ENCODE measurements at regions of chr3 and their contacts with region 1.

Region 1: DNA sequence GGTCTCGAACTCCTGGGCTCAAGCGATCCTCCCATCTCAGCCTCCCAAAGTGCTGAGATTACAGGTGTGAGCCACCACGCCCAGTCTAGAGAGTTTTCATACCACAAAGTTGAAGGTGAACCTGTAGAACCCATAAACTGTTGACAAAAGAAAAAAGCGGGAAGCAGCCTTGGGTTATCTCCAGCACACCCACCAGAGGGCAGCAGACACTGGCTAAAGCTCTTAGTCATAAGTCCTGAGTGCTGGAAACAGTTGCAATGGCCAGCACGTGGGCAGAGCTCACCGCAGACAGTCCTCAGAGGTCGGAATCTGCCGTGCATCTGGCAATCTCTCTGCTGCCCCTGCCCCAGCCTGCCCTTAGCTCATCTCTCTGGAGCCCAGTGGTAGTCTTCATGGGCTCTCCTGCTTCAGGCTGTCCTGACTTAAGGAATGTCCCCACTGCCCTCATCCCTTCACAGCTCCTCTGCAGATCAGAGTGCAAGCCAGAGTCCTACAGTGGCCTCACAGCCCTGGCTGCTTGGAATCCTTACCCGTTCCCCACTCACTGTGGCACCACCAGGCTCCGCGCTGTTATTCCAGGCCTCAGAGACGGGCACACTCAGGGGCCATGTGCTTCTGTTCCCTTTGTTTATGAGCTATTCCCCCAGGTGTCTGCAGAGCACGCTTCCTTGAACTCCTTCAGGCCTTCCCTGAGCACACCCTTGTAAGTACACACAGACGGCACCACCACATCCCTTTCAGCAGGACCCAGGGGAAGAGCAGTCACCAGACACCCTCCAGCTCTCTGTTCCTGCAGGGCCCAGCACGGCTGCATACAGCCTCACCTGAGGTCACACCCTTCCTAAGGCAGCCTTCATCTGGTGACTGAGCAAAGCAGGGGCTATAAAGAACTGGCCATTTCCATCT is 8.8 kb upstream of the ELP6 start:
- DNase-seq: peak; percentile 25 to 85 (median 57)
- ATAC-seq: peak; percentile 85 to 93 (median 87)
- H3K4me3 ChIP-seq: no peak overlapping the region
- H3K4me3 Mint-ChIP-seq: no peak overlapping the region
- H3K27ac ChIP-seq: no peak overlapping the region
- H3K27ac Mint-ChIP-seq: no peak overlapping the region
- H3K4me1 ChIP-seq: peaks cover 0 to 6% of the 10 kb centered on the region in 2 experiments
- H3K4me1 Mint-ChIP-seq: peaks cover 0 to 3% (median 0%) of the 10 kb centered on the region in 3 donors
- H3K27me3 ChIP-seq: no peaks in the 10 kb centered on the region
- H3K27me3 Mint-ChIP-seq: no peaks in the 10 kb centered on the region

Region 2: DNA sequence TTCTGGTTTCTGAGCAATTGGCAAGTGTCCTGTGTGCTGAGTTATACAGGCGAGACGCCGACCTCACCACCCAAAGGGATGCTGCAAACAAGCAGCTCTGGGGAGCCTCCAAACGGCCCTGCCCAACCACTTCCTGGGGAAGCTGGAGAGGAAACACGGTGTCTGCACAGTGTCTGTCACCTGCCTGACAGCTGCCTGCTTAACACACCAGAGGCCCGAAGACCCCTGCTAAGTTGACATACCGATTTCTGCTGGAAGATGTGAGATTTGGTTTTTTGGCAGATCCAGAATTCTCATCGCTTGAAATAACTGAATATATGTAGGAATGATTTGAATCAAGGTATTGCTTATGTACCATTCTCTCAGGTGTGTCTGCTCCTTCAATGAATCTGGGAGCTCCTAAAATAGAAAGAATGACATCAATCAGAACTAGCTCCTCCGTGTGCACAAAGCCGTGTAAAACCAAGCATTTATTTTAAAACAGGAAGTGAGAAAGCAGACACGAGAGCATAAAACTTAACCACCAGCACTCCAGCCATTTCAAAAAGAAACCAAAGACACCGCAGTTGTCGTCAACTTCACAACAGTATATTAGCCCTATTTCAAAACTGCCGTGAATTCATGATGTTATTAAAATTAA is 983.4 kb before region 1 on chr3:
- CTCF ChIA-PET with region 1: no interaction called
- POLR2A ChIA-PET with region 1: no interaction called
- DNase-seq: peak; percentile 68 to 93 (median 86)
- ATAC-seq: peak; percentile 95 to 96 (median 95)
- H3K4me3 ChIP-seq: peak overlapping the region; percentile 17 to 59
- H3K4me3 Mint-ChIP-seq: peak overlapping the region; percentile 60 to 62 (median 62)
- H3K27ac ChIP-seq: peak overlapping the region; percentile 66
- H3K27ac Mint-ChIP-seq: peak overlapping the region; percentile 90 to 91
- H3K4me1 ChIP-seq: peaks cover 38 to 44% of the 10 kb centered on the region in 2 experiments
- H3K4me1 Mint-ChIP-seq: peaks cover 57 to 82% (median 70%) of the 10 kb centered on the region in 3 donors
- H3K27me3 ChIP-seq: no peaks in the 10 kb centered on the region
- H3K27me3 Mint-ChIP-seq: no peaks in the 10 kb centered on the region

Region 3: GRCh38 chr3:47347217-47347801 is 175.0 kb before region 1 on chr3:
- CTCF ChIA-PET with region 1: no interaction called
- POLR2A ChIA-PET with region 1: interaction called in 1 of 2 experiments, 11 read pairs
- DNase-seq: no peak
- ATAC-seq: no peak
- H3K4me3 ChIP-seq: no peak overlapping the region
- H3K4me3 Mint-ChIP-seq: no peak overlapping the region
- H3K27ac ChIP-seq: no peak overlapping the region
- H3K27ac Mint-ChIP-seq: no peak overlapping the region
- H3K4me1 ChIP-seq: no peaks in the 10 kb centered on the region
- H3K4me1 Mint-ChIP-seq: peaks cover 8 to 11% (median 10%) of the 10 kb centered on the region in 3 donors
- H3K27me3 ChIP-seq: no peaks in the 10 kb centered on the region
- H3K27me3 Mint-ChIP-seq: no peaks in the 10 kb centered on the region

Region 4: DNA sequence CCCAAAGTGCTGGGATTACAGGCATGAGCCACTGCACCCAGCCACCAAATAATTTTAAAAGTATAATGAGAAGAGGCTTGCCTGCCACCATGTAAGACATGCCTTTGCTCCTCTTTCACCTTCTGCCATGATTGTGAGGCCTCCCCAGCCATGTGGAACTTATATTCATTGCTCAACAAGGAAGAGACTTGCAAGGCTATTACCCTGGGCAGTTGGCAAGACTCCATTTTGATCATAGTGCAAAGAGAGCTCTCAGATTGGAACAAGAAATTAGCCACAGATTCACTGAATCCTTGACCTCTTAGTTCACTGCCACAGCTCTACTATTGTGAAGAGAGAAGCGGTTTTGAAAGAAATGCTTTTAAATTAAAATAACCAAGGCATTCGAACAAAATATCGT is 52.7 kb before region 1 on chr3:
- CTCF ChIA-PET with region 1: no interaction called
- POLR2A ChIA-PET with region 1: no interaction called
- DNase-seq: no peak
- ATAC-seq: no peak
- H3K4me3 ChIP-seq: no peak overlapping the region
- H3K4me3 Mint-ChIP-seq: no peak overlapping the region
- H3K27ac ChIP-seq: no peak overlapping the region
- H3K27ac Mint-ChIP-seq: no peak overlapping the region
- H3K4me1 ChIP-seq: peaks cover 7 to 14% of the 10 kb centered on the region in 2 experiments
- H3K4me1 Mint-ChIP-seq: peaks cover 37 to 45% (median 38%) of the 10 kb centered on the region in 3 donors
- H3K27me3 ChIP-seq: no peaks in the 10 kb centered on the region
- H3K27me3 Mint-ChIP-seq: no peaks in the 10 kb centered on the region

Region 5: GRCh38 chr3:47791193-47791855 is 269.0 kb after region 1 on chr3:
- CTCF ChIA-PET with region 1: interaction called in 1 of 2 experiments, 10 read pairs
- POLR2A ChIA-PET with region 1: interaction called in 1 of 2 experiments, 3 read pairs
- DNase-seq: no peak
- ATAC-seq: no peak
- H3K4me3 ChIP-seq: no peak overlapping the region
- H3K4me3 Mint-ChIP-seq: no peak overlapping the region
- H3K27ac ChIP-seq: no peak overlapping the region
- H3K27ac Mint-ChIP-seq: no peak overlapping the region
- H3K4me1 ChIP-seq: peaks cover 0 to 4% of the 10 kb centered on the region in 2 experiments
- H3K4me1 Mint-ChIP-seq: peaks cover 0 to 2% (median 0%) of the 10 kb centered on the region in 3 donors
- H3K27me3 ChIP-seq: no peaks in the 10 kb centered on the region
- H3K27me3 Mint-ChIP-seq: no peaks in the 10 kb centered on the region

Measured in T-cell (primary cell).